ENCODE measurements at regions of chr15 and their contacts with region 1.

Region 1: DNA sequence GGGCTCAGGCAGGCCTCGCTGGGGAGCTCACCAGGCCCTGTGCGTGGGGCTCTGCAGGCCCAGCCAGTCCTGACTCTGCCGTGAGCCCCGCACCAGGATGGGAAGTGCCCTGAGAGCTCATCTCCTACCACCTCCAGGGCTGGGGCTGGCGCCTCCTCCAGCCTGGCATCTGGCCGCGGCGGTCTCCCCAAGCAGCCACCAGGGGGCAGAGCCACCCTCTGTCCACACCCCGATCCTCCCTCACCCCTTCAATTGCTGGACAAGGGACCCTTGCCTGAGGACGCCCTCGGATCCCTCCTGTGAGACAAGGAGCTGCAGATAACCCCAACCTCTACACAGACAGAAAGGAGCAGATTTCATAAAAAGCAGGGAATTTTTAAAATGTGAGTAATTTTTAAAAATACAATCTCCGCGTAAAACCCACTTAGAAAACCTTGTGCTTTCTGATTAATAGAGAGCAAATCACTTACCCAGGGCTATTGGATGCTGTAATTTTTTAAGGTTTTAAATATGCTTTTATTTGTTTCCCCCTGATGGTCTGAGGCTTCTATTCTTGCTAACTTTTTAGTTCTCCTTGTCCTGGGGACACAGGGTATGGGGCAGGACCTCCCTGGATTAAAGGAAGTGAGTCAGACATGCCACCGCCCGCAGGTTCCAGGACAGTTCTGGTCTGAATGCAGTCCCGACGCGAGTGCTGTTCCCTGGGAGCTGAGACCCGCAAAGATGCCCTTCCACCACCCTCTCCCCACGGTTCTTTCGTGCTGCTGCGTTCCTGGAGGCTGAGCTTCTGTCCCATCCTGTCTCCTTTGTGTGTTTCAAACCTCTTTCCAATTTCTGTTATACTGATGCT is 52.3 kb upstream of the CHRNA7 start:
- DNase-seq: peak; percentile 37 to 62
- ATAC-seq: peak; percentile 44 to 78 (median 66)
- H3K4me3 ChIP-seq: no peak overlapping the region
- H3K27ac ChIP-seq: no peak overlapping the region
- H3K4me1 ChIP-seq: peaks cover 0 to 18% (median 10%) of the 10 kb centered on the region in 9 donors
- H3K27me3 ChIP-seq: peaks cover 0 to 49% (median 34%) of the 10 kb centered on the region in 7 donors
- CTCF ChIP-seq: peak; percentile 58 to 96 (median 79)

Region 2: GRCh38 chr15:31571671-31572070 is 406.4 kb before region 1 on chr15:
- intact Hi-C with region 1: loop called in 1 of 10 experiments (anchors 5 kb)
- DNase-seq: no peak
- ATAC-seq: no peak
- H3K4me3 ChIP-seq: no peak overlapping the region
- H3K27ac ChIP-seq: no peak overlapping the region
- H3K4me1 ChIP-seq: no peaks in the 10 kb centered on the region
- H3K27me3 ChIP-seq: no peaks in the 10 kb centered on the region
- CTCF ChIP-seq: peak in 5 of 9 donors; percentile 20 to 42 (median 33)

Region 3: GRCh38 chr15:31660816-31661215 is 317.2 kb before region 1 on chr15:
- intact Hi-C with region 1: loop called in 1 of 10 experiments (anchors 10 kb)
- DNase-seq: no peak
- ATAC-seq: no peak
- H3K4me3 ChIP-seq: no peak overlapping the region
- H3K27ac ChIP-seq: no peak overlapping the region
- H3K4me1 ChIP-seq: no peaks in the 10 kb centered on the region
- H3K27me3 ChIP-seq: no peaks in the 10 kb centered on the region
- CTCF ChIP-seq: no peak

Region 4: DNA sequence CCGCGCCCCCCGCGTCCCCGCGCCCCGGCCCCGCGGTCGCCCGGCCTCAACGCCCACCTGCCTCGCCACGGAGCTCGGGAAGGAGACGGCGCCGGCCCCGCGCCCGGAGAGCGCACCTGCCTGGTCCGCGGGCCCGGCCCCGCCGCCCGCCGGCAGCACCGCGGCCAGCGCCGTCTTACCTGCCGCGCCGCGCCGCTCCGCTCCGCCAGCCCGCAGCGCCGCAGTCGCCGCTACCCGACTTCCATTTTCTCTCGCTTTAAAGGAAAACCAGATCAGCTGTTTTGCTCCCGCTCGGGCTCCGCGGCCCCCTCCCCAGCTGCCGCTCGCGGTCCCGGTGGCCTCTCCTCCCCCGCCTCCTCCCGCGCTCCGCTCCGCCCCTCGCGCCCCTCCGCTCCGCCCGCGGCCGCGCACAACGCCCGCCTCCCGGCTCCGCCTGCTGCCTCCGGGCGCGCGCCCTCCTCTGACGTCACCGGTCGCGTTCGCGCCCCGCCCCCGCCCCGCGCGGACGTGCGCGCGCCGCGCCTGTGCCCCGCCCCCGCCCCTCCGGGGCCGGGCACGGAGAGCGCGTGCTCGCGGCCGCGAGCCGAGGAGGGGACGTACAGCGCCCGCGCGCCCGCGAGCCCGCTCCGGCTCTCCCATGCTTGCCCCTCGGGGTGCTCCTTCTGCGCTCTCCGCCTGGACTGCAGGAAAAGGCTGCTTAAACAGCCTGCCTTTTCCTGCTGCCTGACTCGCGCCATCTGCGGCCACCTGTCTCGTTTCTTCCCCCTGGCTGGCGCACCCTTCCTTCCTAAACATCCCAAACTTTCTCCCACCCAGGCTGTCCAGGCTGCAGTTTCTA is 107.5 kb before region 1 on chr15:
- intact Hi-C with region 1: loop called in 1 of 10 experiments (anchors 5 kb)
- DNase-seq: peak; percentile 84 to 90
- ATAC-seq: peak; percentile 96 to 99 (median 97)
- H3K4me3 ChIP-seq: peak within 1 kb of the TSS in 9 of 10 donors; percentile 51 to 69 (median 66)
- H3K27ac ChIP-seq: peak within 1 kb of the TSS in 9 of 10 donors; percentile 2 to 80 (median 75)
- H3K4me1 ChIP-seq: peaks cover 0 to 28% (median 5%) of the 10 kb centered on the region in 9 donors
- H3K27me3 ChIP-seq: peaks cover 0 to 13% (median 0%) of the 10 kb centered on the region in 7 donors
- CTCF ChIP-seq: no peak

Region 5: GRCh38 chr15:31934821-31935220 is 43.2 kb before region 1 on chr15:
- intact Hi-C with region 1: loop called in 1 of 10 experiments (anchors 1 kb)
- DNase-seq: no peak
- ATAC-seq: no peak
- H3K4me3 ChIP-seq: no peak overlapping the region
- H3K27ac ChIP-seq: no peak overlapping the region
- H3K4me1 ChIP-seq: no peaks in the 10 kb centered on the region
- H3K27me3 ChIP-seq: peaks cover 0 to 15% (median 0%) of the 10 kb centered on the region in 7 donors
- CTCF ChIP-seq: no peak